MCF 10A (cell line): ENCODE measurements at regions of chr4 and their contacts with region 1.

Region 1: DNA sequence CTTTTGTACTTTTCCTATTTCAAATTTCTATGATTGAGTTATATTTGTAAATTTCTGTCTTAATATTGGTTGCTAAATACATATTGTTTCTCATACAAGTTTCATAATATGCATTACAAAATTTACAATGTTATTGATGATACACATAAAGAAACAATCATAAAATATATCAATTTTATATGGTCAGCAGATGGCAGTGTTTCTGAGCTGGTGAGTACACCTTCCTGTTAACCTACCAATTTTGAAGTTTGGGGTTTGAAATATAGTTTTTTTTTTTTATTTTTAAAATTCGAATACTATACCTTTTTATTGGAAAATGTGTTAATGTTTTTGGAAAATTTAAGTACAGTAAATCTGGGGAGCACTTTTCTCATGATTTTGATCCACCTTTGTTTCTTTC is 1953.1 kb upstream of the ADGRL3 start:
- DNase-seq: peak; percentile 16
- H3K4me3 Mint-ChIP-seq: no peak overlapping the region
- H3K27ac Mint-ChIP-seq: no peak overlapping the region
- H3K4me1 Mint-ChIP-seq: no peaks in the 10 kb centered on the region
- H3K27me3 Mint-ChIP-seq: no peaks in the 10 kb centered on the region
- CTCF ChIP-seq: peak; percentile 45

Region 2: GRCh38 chr4:58732973-58733372 is 514.1 kb before region 1 on chr4:
- CTCF ChIA-PET with region 1: interaction called, 3 read pairs
- POLR2A ChIA-PET with region 1: no interaction called
- intact Hi-C with region 1: loop called (anchors 10 kb)
- DNase-seq: peak; percentile 15
- H3K4me3 Mint-ChIP-seq: no peak overlapping the region
- H3K27ac Mint-ChIP-seq: no peak overlapping the region
- H3K4me1 Mint-ChIP-seq: no peaks in the 10 kb centered on the region
- H3K27me3 Mint-ChIP-seq: no peaks in the 10 kb centered on the region
- CTCF ChIP-seq: peak; percentile 7

Region 3: GRCh38 chr4:59135248-59135985 is 111.6 kb before region 1 on chr4:
- CTCF ChIA-PET with region 1: no interaction called
- POLR2A ChIA-PET with region 1: no interaction called
- intact Hi-C with region 1: no loop called
- DNase-seq: no peak
- H3K4me3 Mint-ChIP-seq: no peak overlapping the region
- H3K27ac Mint-ChIP-seq: no peak overlapping the region
- H3K4me1 Mint-ChIP-seq: no peaks in the 10 kb centered on the region
- H3K27me3 Mint-ChIP-seq: no peaks in the 10 kb centered on the region
- CTCF ChIP-seq: no peak

Region 4: GRCh38 chr4:59484944-59485343 is 237.9 kb after region 1 on chr4:
- CTCF ChIA-PET with region 1: no interaction called
- POLR2A ChIA-PET with region 1: no interaction called
- intact Hi-C with region 1: no loop called
- DNase-seq: no peak
- H3K4me3 Mint-ChIP-seq: no peak overlapping the region
- H3K27ac Mint-ChIP-seq: no peak overlapping the region
- H3K4me1 Mint-ChIP-seq: no peaks in the 10 kb centered on the region
- H3K27me3 Mint-ChIP-seq: no peaks in the 10 kb centered on the region
- CTCF ChIP-seq: no peak

Region 5: GRCh38 chr4:59525885-59526284 is 278.9 kb after region 1 on chr4:
- CTCF ChIA-PET with region 1: no interaction called
- POLR2A ChIA-PET with region 1: no interaction called
- intact Hi-C with region 1: no loop called
- DNase-seq: no peak
- H3K4me3 Mint-ChIP-seq: no peak overlapping the region
- H3K27ac Mint-ChIP-seq: no peak overlapping the region
- H3K4me1 Mint-ChIP-seq: no peaks in the 10 kb centered on the region
- H3K27me3 Mint-ChIP-seq: no peaks in the 10 kb centered on the region
- CTCF ChIP-seq: no peak

Region 6: DNA sequence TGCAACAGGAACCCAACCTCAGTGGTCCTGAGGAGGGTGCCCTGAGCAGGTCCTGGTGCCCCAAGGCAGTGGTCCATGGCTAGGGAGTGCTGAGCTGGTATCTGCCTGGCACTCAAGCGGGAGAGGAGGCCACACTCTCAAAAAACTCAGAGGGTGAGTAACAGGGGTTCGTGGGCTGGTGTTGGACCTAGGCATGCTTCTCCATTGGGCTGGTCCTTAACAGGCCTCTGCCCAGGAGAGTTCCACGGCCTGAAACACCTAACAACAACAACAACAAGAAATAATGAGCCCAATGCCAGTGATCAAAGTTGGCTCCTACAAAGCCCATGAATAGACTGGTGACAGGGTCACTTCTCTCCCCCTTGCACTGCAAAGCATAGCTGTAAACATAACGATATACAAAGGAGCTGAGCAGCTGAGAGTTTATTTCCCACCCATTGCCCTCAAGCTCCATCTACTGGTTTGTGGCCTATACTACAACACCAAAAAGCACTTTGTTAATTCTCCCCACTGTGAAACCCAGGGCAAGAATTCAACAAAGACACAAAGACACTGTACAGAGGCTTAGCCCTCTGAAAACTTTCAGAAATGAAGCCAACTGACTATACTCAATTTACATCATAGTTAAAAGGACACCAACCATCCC is 1216.9 kb after region 1 on chr4:
- CTCF ChIA-PET with region 1: interaction called, 4 read pairs
- POLR2A ChIA-PET with region 1: no interaction called
- intact Hi-C with region 1: loop called (anchors 1 kb)
- DNase-seq: peak; percentile 51
- H3K4me3 Mint-ChIP-seq: no peak overlapping the region
- H3K27ac Mint-ChIP-seq: no peak overlapping the region
- H3K4me1 Mint-ChIP-seq: no peaks in the 10 kb centered on the region
- H3K27me3 Mint-ChIP-seq: no peaks in the 10 kb centered on the region
- CTCF ChIP-seq: peak; percentile 48

Region 7: GRCh38 chr4:60619531-60620305 is 1372.7 kb after region 1 on chr4:
- CTCF ChIA-PET with region 1: no interaction called
- POLR2A ChIA-PET with region 1: no interaction called
- intact Hi-C with region 1: no loop called
- DNase-seq: no peak
- H3K4me3 Mint-ChIP-seq: no peak overlapping the region
- H3K27ac Mint-ChIP-seq: no peak overlapping the region
- H3K4me1 Mint-ChIP-seq: no peaks in the 10 kb centered on the region
- H3K27me3 Mint-ChIP-seq: no peaks in the 10 kb centered on the region
- CTCF ChIP-seq: no peak